CD4-positive, alpha-beta memory T cell (primary cell): ENCODE measurements at regions of chr4 and their contacts with region 1.

Region 1: GRCh38 chr4:142126890-142127497 is 490.6 kb downstream of the IL15 start:
- DNase-seq: peak; percentile 61 to 67 (median 65)
- H3K4me3 ChIP-seq: no peak overlapping the region
- H3K4me3 Mint-ChIP-seq: no peak overlapping the region
- H3K27ac ChIP-seq: no peak overlapping the region
- H3K27ac Mint-ChIP-seq: peak overlapping the region in 3 of 7 donors; percentile 54 to 57 (median 54)
- H3K4me1 ChIP-seq: peaks cover 31% of the 10 kb centered on the region
- H3K4me1 Mint-ChIP-seq: peaks cover 19 to 33% (median 26%) of the 10 kb centered on the region in 4 donors
- H3K27me3 ChIP-seq: no peaks in the 10 kb centered on the region
- H3K27me3 Mint-ChIP-seq: no peaks in the 10 kb centered on the region

Region 2: GRCh38 chr4:141307241-141307689 is 819.7 kb before region 1 on chr4:
- CTCF ChIA-PET with region 1: no interaction called
- POLR2A ChIA-PET with region 1: no interaction called
- intact Hi-C with region 1: loop called (anchors 5 kb)
- DNase-seq: peak; percentile 60 to 80 (median 64)
- H3K4me3 ChIP-seq: no peak overlapping the region
- H3K4me3 Mint-ChIP-seq: no peak overlapping the region
- H3K27ac ChIP-seq: no peak overlapping the region
- H3K27ac Mint-ChIP-seq: no peak overlapping the region
- H3K4me1 ChIP-seq: no peaks in the 10 kb centered on the region
- H3K4me1 Mint-ChIP-seq: peaks cover 0 to 5% (median 2%) of the 10 kb centered on the region in 4 donors
- H3K27me3 ChIP-seq: no peaks in the 10 kb centered on the region
- H3K27me3 Mint-ChIP-seq: peaks cover 0 to 3% of the 10 kb centered on the region in 2 donors

Region 3: DNA sequence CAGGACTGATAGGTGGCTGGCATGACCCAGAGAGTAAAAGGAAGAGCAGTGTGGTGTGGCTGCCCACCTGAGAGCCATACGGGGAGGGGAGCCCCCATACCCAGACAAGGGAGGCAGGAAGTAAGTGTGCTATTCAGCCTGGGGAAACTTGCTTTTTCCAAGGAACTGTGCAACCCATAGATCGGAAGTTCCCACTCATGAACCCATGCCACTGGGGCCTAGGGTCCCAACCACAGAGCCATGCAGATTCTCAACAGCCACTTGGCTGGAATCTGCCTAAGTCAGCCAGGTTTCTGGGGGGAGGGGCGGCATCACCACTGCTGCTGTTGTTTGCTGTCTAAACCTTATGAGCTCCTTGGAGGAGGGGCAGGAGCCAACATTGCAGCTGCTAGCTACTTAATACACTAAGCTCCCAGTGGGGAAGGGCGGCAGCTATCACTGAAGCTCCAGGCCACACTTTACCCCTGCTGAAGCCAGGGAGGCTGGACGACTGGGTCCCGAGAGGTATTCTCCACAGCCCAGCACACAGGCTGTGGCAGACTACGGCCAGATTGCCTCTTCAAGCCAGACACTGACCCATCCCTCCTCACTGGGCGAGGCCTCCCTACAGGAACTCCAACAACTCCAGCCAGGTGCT is 308.7 kb after region 1 on chr4:
- CTCF ChIA-PET with region 1: no interaction called
- POLR2A ChIA-PET with region 1: no interaction called
- intact Hi-C with region 1: loop called (anchors 2 kb)
- DNase-seq: no peak
- H3K4me3 ChIP-seq: no peak overlapping the region
- H3K4me3 Mint-ChIP-seq: no peak overlapping the region
- H3K27ac ChIP-seq: no peak overlapping the region
- H3K27ac Mint-ChIP-seq: peak overlapping the region in 1 of 7 donors; percentile 63
- H3K4me1 ChIP-seq: peaks cover 16% of the 10 kb centered on the region
- H3K4me1 Mint-ChIP-seq: peaks cover 15 to 30% (median 26%) of the 10 kb centered on the region in 4 donors
- H3K27me3 ChIP-seq: no peaks in the 10 kb centered on the region
- H3K27me3 Mint-ChIP-seq: no peaks in the 10 kb centered on the region

Region 4: DNA sequence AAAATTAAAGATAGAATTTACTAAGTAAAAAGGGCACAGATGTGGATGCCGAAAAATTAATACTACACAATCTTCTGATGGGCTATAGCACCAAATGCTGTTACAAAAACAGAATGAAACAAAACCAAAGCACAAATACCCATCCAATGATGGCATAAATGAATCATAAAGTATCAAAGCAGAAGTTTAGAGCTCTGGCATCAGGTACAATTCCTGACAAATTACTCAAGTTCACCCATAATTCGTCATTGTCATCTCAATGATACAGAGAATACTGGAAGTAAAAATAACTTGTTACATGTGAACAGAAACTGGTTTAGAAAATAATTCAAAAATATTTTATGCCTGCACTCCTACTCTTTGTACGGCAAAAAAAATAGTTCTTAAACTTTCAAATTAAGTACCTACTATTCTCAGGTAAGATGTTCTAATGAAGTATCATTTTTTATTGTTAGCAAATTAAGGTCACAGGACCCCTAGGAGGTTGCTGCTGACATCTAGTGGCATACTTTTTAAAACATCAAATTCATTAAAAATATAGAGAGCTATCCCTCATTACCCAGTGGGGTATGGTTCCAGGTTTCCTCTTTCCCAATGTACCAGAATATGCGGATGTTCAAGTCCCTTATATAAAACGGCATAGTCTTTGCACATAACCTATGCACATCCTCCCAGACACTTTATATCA is 593.0 kb after region 1 on chr4:
- CTCF ChIA-PET with region 1: interaction called, 6 read pairs
- POLR2A ChIA-PET with region 1: interaction called, 4 read pairs
- intact Hi-C with region 1: loop called (anchors 1 kb)
- DNase-seq: peak in 4 of 5 donors; percentile 54 to 60 (median 57)
- H3K4me3 ChIP-seq: no peak overlapping the region
- H3K4me3 Mint-ChIP-seq: peak overlapping the region in 5 of 8 donors; percentile 19 to 62 (median 49)
- H3K27ac ChIP-seq: no peak overlapping the region
- H3K27ac Mint-ChIP-seq: peak overlapping the region in 5 of 7 donors; percentile 36 to 77 (median 69)
- H3K4me1 ChIP-seq: peaks cover 14% of the 10 kb centered on the region
- H3K4me1 Mint-ChIP-seq: peaks cover 11 to 26% (median 13%) of the 10 kb centered on the region in 4 donors
- H3K27me3 ChIP-seq: no peaks in the 10 kb centered on the region
- H3K27me3 Mint-ChIP-seq: peaks cover 0 to 1% of the 10 kb centered on the region in 2 donors

Region 5: DNA sequence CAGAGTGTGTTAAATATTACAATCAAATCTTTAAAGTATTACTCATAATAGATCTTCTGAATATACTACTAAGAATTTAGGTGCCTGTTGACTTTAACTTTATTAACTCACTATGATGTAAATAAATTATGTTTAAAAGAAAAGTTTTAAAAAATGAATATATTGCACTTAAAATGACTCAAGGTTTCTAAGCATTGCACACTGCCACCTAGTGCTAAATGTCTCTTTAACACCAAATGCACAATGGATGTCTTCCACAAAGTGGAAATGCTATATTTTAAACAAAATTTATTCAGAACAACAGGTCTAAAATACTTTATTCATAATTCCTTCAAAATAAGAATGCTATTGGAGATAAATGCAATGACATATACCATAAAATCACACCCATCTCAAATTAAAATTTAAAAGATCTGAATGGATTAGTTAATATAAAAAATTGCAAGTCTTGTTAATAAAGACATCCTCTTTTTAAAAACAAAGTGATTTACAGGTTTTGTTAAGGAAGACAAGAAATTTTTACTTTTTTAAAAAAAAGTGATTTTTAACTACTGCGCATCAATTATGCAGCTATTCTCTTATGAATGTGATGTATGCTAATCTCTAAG is 713.6 kb after region 1 on chr4:
- CTCF ChIA-PET with region 1: interaction called, 23 read pairs
- POLR2A ChIA-PET with region 1: interaction called, 10 read pairs
- intact Hi-C with region 1: loop called (anchors 1 kb)
- DNase-seq: peak in 4 of 5 donors; percentile 26 to 42 (median 36)
- H3K4me3 ChIP-seq: no peak overlapping the region
- H3K4me3 Mint-ChIP-seq: no peak overlapping the region
- H3K27ac ChIP-seq: no peak overlapping the region
- H3K27ac Mint-ChIP-seq: no peak overlapping the region
- H3K4me1 ChIP-seq: peaks cover 12% of the 10 kb centered on the region
- H3K4me1 Mint-ChIP-seq: peaks cover 8 to 13% (median 11%) of the 10 kb centered on the region in 4 donors
- H3K27me3 ChIP-seq: no peaks in the 10 kb centered on the region
- H3K27me3 Mint-ChIP-seq: peaks cover 5 to 6% of the 10 kb centered on the region in 2 donors